ENCODE measurements at regions of chr5 and their contacts with region 1.

Region 1: GRCh38 chr5:138575194-138576015 is at the start of gene HSPA9:
- DNase-seq: peak; percentile 99
- H3K4me3 ChIP-seq: peak within 1 kb of the TSS; percentile 93
- H3K27ac ChIP-seq: peak within 1 kb of the TSS; percentile 100
- H3K27me3 ChIP-seq: no peaks in the 10 kb centered on the region
- CTCF ChIP-seq: no peak
- polyA plus RNA-seq, gene HSPA9: 194 and 207 TPM in 2 replicates

Region 2: DNA sequence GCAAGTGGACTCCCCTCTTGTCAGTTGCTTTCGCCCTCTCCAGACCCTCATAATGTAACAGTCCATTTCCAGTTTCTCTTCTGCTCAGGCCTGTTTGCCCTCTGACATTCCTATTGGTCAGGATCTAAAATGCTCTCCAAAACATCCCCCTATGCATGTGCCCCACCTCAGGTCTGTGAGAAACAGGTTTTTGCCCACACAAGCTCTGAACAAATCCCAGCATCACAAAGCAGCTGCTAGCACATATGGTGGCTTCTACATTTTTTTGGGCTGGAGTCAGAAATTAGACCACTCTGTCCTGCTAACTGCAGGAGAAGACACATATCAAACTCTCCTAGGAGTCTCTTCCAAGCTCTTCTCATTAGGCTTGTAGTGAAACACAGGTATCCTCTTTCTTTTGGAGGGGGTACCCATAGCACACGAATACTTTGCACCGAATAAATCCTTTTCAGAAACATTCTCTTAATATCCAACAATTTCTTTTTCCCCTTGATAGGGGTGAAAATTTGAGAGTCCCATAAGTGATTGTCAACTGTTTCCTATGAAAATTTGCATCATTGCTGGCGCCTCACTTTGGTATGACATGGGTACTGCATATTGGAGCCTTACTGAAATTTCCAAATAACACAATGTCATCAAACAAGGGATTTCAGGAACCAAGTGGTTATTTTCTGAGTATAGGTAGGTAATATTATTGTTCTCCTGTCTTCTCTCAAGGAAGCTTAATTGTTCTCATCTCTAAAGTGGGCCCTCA is 19.1 kb after region 1 on chr5:
- CTCF ChIA-PET with region 1: interaction called, 12 read pairs
- POLR2A ChIA-PET with region 1: interaction called, 4 read pairs
- DNase-seq: no peak
- H3K4me3 ChIP-seq: no peak overlapping the region
- H3K27ac ChIP-seq: no peak overlapping the region
- H3K27me3 ChIP-seq: peaks cover 10% of the 10 kb centered on the region
- CTCF ChIP-seq: peak; percentile 43

Region 3: GRCh38 chr5:138725138-138725833 is 149.9 kb after region 1 on chr5:
- CTCF ChIA-PET with region 1: interaction called, 12 read pairs
- POLR2A ChIA-PET with region 1: interaction called, 4 read pairs
- DNase-seq: peak; percentile 4
- H3K4me3 ChIP-seq: no peak overlapping the region
- H3K27ac ChIP-seq: no peak overlapping the region
- H3K27me3 ChIP-seq: peaks cover 16% of the 10 kb centered on the region
- CTCF ChIP-seq: peak; percentile 44

Region 4: DNA sequence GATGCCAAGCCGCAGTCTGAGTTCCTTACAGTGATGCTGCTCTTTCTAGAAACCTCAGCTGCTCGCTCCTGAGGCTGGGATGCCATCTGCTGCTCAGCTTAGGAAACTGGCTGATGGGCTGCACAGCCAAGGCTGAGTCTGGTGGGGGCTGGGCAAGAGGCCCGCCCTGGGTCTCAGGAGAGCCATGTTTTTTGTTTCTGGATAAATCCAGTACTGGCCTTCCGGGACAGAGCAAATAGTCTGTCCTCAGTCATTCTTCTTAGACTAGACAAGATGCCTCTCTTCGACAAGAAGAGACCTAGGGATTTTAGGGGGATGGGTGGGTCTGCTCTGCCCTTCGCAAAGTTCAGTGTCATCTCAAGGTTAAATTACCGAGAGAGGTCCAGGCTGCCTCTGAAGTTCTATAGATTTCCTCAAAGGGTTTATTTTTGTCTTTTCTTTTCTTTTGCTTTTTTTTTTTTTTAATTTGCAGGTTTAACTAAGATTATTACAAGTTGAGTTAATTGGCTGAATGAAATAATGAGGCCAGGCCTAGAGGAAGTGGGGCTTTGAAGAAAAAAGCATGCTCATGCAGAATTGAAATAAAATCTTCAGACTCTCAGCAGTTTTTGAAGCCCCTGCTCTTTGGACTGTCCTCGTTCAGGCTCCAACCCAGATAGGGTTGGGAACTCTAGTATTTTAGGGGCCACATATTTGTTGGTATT is 687.5 kb after region 1 on chr5:
- CTCF ChIA-PET with region 1: interaction called, 17 read pairs
- POLR2A ChIA-PET with region 1: no interaction called
- DNase-seq: peak; percentile 87
- H3K4me3 ChIP-seq: no peak overlapping the region
- H3K27ac ChIP-seq: no peak overlapping the region
- H3K27me3 ChIP-seq: peaks cover 4% of the 10 kb centered on the region
- CTCF ChIP-seq: peak; percentile 96